ENCODE measurements at regions of chr7 and their contacts with region 1.

Region 1: DNA sequence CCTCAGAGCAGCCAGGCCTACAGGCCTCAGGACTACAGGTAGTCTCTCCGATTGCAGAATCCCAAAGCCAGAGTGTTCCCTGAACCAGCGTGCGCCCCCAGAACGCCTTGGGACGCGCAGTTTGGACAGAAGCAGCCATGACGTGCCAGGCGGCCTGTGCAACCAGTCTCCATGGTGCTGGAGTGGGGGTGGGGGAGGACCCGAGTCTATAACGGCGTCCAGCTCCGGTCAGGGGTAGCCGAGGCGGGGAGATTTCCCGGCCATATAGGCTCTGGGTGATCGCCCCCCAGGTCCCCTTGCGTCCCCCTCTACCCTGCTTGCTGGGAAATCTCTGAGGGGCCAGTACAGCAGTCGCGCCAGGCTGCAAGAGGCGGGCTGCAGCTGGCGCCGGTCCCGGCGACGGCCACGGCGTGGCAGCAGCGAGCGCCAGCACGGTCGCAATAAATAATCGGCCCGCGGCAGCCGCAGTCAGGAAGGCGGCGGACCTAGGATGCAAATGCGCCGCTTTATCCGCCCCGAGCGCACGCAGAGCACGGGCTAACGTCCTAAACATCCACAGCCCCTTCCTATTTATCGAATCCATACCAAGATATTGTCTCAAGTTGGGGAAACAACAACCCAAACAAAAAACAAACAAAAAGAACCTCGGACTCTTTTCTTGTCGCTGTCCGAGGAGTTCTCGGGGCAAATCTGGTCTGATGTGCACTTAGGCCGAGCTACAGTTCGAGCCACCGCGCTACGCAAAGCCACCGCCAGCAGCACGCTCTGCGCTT is 1.6 kb downstream of the HOXA3 start:
- DNase-seq: peak; percentile 84 to 90 (median 87)
- ATAC-seq: peak; percentile 55
- H3K4me3 ChIP-seq: peak overlapping the region; percentile 74
- H3K4me1 ChIP-seq: peaks cover 43% of the 10 kb centered on the region
- CTCF ChIP-seq: peak; percentile 94

Region 2: DNA sequence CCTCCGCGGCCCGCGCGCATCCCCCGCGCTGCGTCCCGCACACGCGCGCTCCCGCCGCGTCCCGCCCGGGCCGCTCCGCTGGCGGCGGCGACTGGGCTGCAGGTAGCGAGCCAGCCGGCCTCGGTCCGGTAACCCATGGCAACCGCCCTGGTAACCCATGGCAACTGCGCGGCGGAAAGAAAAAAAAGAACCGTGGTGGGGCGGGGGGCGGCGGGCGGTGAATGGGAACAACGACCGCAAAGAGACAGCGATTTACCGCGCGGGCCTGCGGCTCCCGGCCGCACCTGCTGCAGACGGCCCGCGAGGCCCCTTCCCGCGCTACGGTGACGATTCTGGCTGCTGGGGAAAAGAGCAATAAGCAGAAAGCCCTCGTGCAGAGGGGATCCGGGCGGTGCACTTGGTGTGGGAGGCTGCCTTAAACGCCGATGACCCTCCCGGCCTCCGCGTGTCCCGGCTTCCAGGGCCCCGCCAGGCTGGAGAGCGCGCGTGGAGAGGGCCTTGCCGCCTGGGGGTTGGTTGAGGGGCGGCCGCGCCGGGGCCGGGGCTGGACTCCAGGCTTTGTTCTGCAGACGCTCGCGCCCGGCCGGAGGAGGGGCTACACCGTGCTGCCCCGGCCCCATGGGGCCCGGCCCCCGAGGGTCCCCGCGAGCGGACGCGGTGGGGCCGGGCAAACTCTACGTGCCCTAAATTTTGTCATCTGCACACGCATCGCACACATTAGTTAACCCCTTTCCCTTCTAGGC is 774.4 kb before region 1 on chr7:
- intact Hi-C with region 1: loop called in 1 of 2 experiments (anchors 10 kb)
- DNase-seq: peak; percentile 39 to 69 (median 63)
- ATAC-seq: peak; percentile 70
- H3K4me3 ChIP-seq: peak overlapping the region; percentile 17
- H3K4me1 ChIP-seq: no peaks in the 10 kb centered on the region
- CTCF ChIP-seq: no peak

Region 3: GRCh38 chr7:26681819-26682418 is 468.8 kb before region 1 on chr7:
- intact Hi-C with region 1: loop called in 1 of 2 experiments (anchors 5 kb)
- DNase-seq: no peak
- ATAC-seq: peak; percentile 60
- H3K4me3 ChIP-seq: no peak overlapping the region
- H3K4me1 ChIP-seq: no peaks in the 10 kb centered on the region
- CTCF ChIP-seq: peak; percentile 56

Region 4: DNA sequence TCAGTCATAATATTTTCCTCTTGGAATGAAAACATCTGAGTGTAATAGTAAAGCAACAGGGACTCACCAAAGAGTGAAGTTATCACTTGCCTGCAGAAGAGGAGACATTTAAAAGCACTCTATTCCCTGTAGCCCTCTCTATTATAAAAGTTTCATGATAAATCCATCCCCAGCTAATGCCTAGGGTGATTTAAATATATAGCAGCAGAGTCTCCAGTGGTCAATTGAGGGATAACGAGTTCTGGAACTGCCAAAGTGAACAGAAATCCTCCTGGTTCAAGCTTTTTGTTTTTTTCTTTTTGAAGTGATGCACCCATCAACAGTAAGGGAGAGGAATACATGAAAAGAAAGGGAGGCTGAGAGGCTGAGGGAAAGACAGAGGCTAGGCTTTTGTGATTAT is 179.2 kb after region 1 on chr7:
- intact Hi-C with region 1: no loop called
- DNase-seq: no peak
- ATAC-seq: no peak
- H3K4me3 ChIP-seq: no peak overlapping the region
- H3K4me1 ChIP-seq: no peaks in the 10 kb centered on the region
- CTCF ChIP-seq: no peak